Naive thymus-derived CD8-positive, alpha-beta T cell (primary cell): ENCODE measurements at regions of chr11 and their contacts with region 1.

Region 1: GRCh38 chr11:554824-555472 is 5.6 kb downstream of the LMNTD2 start:
- DNase-seq: peak; percentile 58 to 86 (median 73)
- ATAC-seq: peak; percentile 73 to 76
- H3K4me3 Mint-ChIP-seq: peak overlapping the region in 7 of 10 donors; percentile 30 to 70 (median 54)
- H3K27ac Mint-ChIP-seq: peak overlapping the region in 1 of 10 donors; percentile 77
- H3K4me1 Mint-ChIP-seq: peaks cover 3 to 12% (median 7%) of the 10 kb centered on the region in 4 donors
- H3K27me3 Mint-ChIP-seq: no peaks in the 10 kb centered on the region

Region 2: GRCh38 chr11:492427-493226 is 62.3 kb before region 1 on chr11:
- POLR2A ChIA-PET with region 1: no interaction called
- DNase-seq: no peak
- ATAC-seq: peak in 1 of 2 donors; percentile 18
- H3K4me3 Mint-ChIP-seq: no peak overlapping the region
- H3K27ac Mint-ChIP-seq: peak overlapping the region in 2 of 10 donors; percentile 53 to 84
- H3K4me1 Mint-ChIP-seq: peaks cover 0 to 8% (median 4%) of the 10 kb centered on the region in 4 donors
- H3K27me3 Mint-ChIP-seq: no peaks in the 10 kb centered on the region

Region 3: DNA sequence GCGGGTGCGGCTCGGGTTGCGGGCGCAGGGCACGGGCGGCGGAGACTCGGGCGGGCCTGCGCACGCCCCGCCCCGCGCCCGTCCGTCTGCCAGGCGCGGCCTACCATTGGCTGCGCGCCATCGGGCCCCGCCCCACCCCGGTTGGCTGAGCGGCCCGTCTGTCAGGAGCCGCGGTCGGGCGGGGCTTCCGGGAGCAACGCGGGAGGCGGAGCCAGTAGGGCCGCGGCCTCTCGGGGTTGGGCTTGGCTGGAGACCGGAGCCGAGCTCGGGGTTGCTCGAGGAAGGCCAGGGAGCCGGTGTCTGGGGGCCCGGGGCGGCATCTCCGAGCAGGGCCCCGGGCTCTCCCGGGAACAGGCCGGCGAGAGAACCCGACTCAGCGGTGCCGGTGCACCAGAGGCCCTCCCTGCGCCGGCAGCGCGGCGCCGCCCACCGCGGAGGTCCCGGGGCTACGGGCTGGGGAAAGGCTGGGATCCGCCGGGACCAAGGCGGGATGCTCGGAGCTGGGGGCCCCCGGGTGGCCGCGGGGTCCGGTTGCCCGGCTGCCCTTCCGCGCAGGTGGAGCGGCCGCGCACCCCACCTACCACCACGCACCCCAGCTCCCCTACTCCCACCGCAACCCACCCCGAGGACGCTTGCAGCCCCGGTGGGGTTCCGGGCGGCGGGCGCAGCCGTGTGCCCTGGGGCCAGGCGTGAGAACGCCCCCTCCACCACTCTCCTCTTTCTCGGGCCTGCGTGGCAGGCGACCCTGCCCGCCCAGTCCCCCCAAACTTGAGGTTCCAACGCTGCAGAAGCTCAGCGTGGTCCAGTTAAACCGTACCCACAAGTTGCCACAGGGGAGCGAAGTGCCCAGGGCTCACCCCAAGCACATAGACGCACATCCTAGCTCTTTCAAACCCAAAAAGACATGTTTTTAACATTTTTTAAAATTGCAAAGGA is 19.2 kb before region 1 on chr11 and contains the start of gene HRAS:
- POLR2A ChIA-PET with region 1: interaction called, 34 read pairs
- DNase-seq: peak; percentile 90 to 98 (median 96)
- ATAC-seq: peak; percentile 72 to 79
- H3K4me3 Mint-ChIP-seq: peak within 1 kb of the TSS; percentile 85 to 97 (median 96)
- H3K27ac Mint-ChIP-seq: peak within 1 kb of the TSS; percentile 89 to 99 (median 98)
- H3K4me1 Mint-ChIP-seq: peaks cover 2 to 25% (median 18%) of the 10 kb centered on the region in 4 donors
- H3K27me3 Mint-ChIP-seq: no peaks in the 10 kb centered on the region
- polyA plus RNA-seq, gene HRAS: 8.6 to 26.7 (median 15.3) TPM

Region 4: DNA sequence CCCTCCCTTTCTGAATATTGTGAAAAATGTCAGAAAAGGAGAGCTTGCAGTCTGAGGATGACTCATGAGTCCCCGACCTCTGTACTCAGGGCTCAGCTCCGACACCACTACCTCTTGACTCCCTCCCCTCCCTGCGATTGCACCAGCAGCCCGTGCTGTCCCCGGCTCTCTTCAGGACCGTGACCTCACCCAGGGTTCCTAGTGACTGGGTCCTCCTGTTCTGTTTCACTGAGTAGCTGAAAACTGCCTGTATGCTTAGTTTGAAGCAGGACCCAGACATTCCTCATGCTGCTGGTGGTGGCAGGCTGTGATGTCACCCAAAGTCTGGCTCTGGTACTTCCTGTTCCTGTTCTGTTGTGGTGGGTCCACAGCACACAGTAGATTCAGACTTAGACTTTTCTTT is 33.0 kb after region 1 on chr11:
- POLR2A ChIA-PET with region 1: interaction called, 15 read pairs
- DNase-seq: peak; percentile 35 to 88 (median 80)
- ATAC-seq: peak; percentile 95 to 98
- H3K4me3 Mint-ChIP-seq: peak overlapping the region; percentile 70 to 95 (median 86)
- H3K27ac Mint-ChIP-seq: peak overlapping the region; percentile 97 to 100 (median 100)
- H3K4me1 Mint-ChIP-seq: peaks cover 17 to 41% (median 27%) of the 10 kb centered on the region in 4 donors
- H3K27me3 Mint-ChIP-seq: no peaks in the 10 kb centered on the region

Region 5: GRCh38 chr11:720642-721246 is 165.8 kb after region 1 on chr11:
- POLR2A ChIA-PET with region 1: interaction called, 26 read pairs
- DNase-seq: peak in 5 of 10 donors; percentile 25 to 62 (median 41)
- ATAC-seq: peak; percentile 38 to 53
- H3K4me3 Mint-ChIP-seq: peak overlapping the region in 5 of 10 donors; percentile 33 to 79 (median 57)
- H3K27ac Mint-ChIP-seq: peak overlapping the region in 1 of 10 donors; percentile 43
- H3K4me1 Mint-ChIP-seq: peaks cover 6 to 21% (median 16%) of the 10 kb centered on the region in 4 donors
- H3K27me3 Mint-ChIP-seq: peaks cover 4 to 9% (median 7%) of the 10 kb centered on the region in 5 donors

Region 6: DNA sequence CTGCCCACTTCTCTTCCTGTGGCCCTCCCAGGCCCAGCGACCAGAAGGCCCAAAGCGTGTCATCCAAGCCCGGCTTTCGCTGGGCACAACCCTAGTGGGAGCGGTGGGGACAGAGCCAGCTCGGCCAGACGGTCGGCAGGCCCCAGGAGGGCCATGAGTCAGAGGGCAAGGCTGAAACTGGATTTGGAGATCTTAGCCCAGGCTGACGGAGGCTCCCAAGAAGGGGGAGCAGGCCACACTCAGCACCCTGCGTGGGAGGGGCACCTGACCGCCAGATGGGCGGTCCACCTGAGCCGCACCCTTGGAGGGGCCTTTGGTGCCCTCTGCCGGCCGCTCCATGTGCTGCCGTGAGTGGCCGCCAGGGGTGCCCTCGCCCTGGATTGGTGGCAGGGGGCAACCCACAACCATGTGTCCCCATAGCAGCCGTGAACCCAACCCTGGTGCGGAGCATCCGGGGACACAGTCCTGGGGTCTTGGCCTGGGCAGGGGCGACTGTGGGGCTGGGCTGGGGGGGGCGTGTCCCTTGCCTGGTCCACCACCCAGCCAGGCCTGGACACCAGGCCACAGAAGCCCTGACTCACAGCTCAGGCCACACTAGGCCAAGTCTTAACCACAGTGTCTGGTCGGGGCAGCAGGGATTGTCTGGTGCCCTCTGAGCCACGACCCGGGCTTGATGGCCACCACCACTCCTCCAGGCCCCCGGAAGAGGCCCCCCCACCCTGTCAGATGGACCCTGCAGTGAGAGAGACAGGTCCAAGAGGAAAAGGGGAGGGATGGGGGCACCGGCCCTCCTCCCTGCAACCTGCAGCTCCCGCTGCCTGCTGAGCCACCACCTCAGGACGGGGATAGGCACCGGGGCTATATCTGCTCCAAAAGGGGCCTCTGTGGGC is 173.2 kb after region 1 on chr11:
- POLR2A ChIA-PET with region 1: interaction called, 26 read pairs
- DNase-seq: peak; percentile 66 to 85 (median 79)
- ATAC-seq: peak; percentile 67 to 82
- H3K4me3 Mint-ChIP-seq: no peak overlapping the region
- H3K27ac Mint-ChIP-seq: no peak overlapping the region
- H3K4me1 Mint-ChIP-seq: peaks cover 4 to 15% (median 12%) of the 10 kb centered on the region in 4 donors
- H3K27me3 Mint-ChIP-seq: peaks cover 2 to 5% (median 4%) of the 10 kb centered on the region in 5 donors

Region 7: GRCh38 chr11:1260023-1260501 is 705.1 kb after region 1 on chr11:
- POLR2A ChIA-PET with region 1: no interaction called
- DNase-seq: peak in 5 of 10 donors; percentile 20 to 43 (median 23)
- ATAC-seq: peak in 1 of 2 donors; percentile 15
- H3K4me3 Mint-ChIP-seq: no peak overlapping the region
- H3K27ac Mint-ChIP-seq: no peak overlapping the region
- H3K4me1 Mint-ChIP-seq: peaks cover 7 to 20% (median 15%) of the 10 kb centered on the region in 4 donors
- H3K27me3 Mint-ChIP-seq: no peaks in the 10 kb centered on the region